Activated CD4-positive, alpha-beta memory T cell treated with anti-CD3 and anti-CD28 coated beads, Interleukin-2, amount 10 ng/mL, durations not matched to agents 7 days and 5 days (primary cell): ENCODE measurements at regions of chr3 and their contacts with region 1.

Region 1: GRCh38 chr3:66407611-66408218 is 93.1 kb downstream of the LRIG1 start:
- DNase-seq: peak; percentile 76
- H3K4me3 Mint-ChIP-seq: no peak overlapping the region
- H3K27ac Mint-ChIP-seq: no peak overlapping the region
- H3K4me1 Mint-ChIP-seq: peaks cover 2% of the 10 kb centered on the region
- H3K27me3 Mint-ChIP-seq: no peaks in the 10 kb centered on the region

Region 2: GRCh38 chr3:66224220-66224619 is 183.5 kb before region 1 on chr3:
- CTCF ChIA-PET with region 1: no interaction called
- POLR2A ChIA-PET with region 1: no interaction called
- DNase-seq: no peak
- H3K4me3 Mint-ChIP-seq: no peak overlapping the region
- H3K27ac Mint-ChIP-seq: no peak overlapping the region
- H3K4me1 Mint-ChIP-seq: peaks cover 39% of the 10 kb centered on the region
- H3K27me3 Mint-ChIP-seq: no peaks in the 10 kb centered on the region

Region 3: GRCh38 chr3:66394019-66394752 is 13.5 kb before region 1 on chr3:
- CTCF ChIA-PET with region 1: interaction called, 15 read pairs
- POLR2A ChIA-PET with region 1: interaction called, 5 read pairs
- DNase-seq: peak; percentile 73
- H3K4me3 Mint-ChIP-seq: peak overlapping the region; percentile 75
- H3K27ac Mint-ChIP-seq: peak overlapping the region; percentile 97
- H3K4me1 Mint-ChIP-seq: peaks cover 40% of the 10 kb centered on the region
- H3K27me3 Mint-ChIP-seq: no peaks in the 10 kb centered on the region

Region 4: GRCh38 chr3:66442254-66443117 is 34.8 kb after region 1 on chr3:
- CTCF ChIA-PET with region 1: no interaction called
- POLR2A ChIA-PET with region 1: no interaction called
- DNase-seq: no peak
- H3K4me3 Mint-ChIP-seq: no peak overlapping the region
- H3K27ac Mint-ChIP-seq: no peak overlapping the region
- H3K4me1 Mint-ChIP-seq: peaks cover 14% of the 10 kb centered on the region
- H3K27me3 Mint-ChIP-seq: no peaks in the 10 kb centered on the region

Region 5: GRCh38 chr3:66472313-66473134 is 64.8 kb after region 1 on chr3:
- CTCF ChIA-PET with region 1: interaction called, 12 read pairs
- POLR2A ChIA-PET with region 1: no interaction called
- DNase-seq: peak; percentile 61
- H3K4me3 Mint-ChIP-seq: peak overlapping the region; percentile 64
- H3K27ac Mint-ChIP-seq: peak overlapping the region; percentile 90
- H3K4me1 Mint-ChIP-seq: peaks cover 70% of the 10 kb centered on the region
- H3K27me3 Mint-ChIP-seq: peaks cover 1% of the 10 kb centered on the region

Region 6: GRCh38 chr3:66483406-66483906 is 75.7 kb after region 1 on chr3:
- CTCF ChIA-PET with region 1: interaction called, 11 read pairs
- POLR2A ChIA-PET with region 1: no interaction called
- DNase-seq: no peak
- H3K4me3 Mint-ChIP-seq: peak overlapping the region; percentile 6
- H3K27ac Mint-ChIP-seq: no peak overlapping the region
- H3K4me1 Mint-ChIP-seq: peaks cover 82% of the 10 kb centered on the region
- H3K27me3 Mint-ChIP-seq: no peaks in the 10 kb centered on the region

Region 7: GRCh38 chr3:66693461-66694031 is 285.8 kb after region 1 on chr3:
- CTCF ChIA-PET with region 1: no interaction called
- POLR2A ChIA-PET with region 1: no interaction called
- DNase-seq: no peak
- H3K4me3 Mint-ChIP-seq: no peak overlapping the region
- H3K27ac Mint-ChIP-seq: no peak overlapping the region
- H3K4me1 Mint-ChIP-seq: no peaks in the 10 kb centered on the region
- H3K27me3 Mint-ChIP-seq: peaks cover 3% of the 10 kb centered on the region

Region 8: DNA sequence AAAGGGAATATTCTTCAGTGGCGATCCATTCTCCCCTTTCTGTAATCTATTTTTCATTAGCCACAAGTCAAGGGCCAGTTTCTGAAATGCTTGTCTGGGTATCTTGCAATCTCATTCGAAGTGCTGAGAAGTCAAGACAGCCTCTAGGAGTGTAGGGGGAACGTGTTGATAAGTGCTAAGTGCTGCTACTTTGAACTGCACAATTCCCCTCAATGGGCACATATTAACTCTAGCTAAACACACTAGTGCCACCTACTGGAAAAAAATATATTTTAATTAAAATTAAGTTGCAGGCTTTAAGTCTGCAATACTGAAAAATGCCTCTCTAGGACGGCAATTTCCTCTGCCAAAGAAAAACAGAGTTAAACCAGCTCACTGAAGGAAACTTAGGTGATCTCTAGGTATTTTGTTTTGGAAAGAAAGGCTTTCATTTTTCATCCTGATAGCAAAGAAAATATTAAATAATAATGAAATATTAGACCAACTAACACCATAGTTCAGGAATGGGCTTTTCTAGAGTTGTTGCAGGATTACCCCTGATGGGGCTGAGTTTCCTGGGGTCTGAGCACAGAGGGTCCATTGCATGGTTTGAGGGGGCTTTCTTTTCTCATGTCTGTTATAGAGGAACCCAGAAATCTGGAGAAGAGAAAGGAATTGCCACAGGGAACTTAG is 408.5 kb after region 1 on chr3:
- CTCF ChIA-PET with region 1: interaction called, 20 read pairs
- POLR2A ChIA-PET with region 1: no interaction called
- DNase-seq: no peak
- H3K4me3 Mint-ChIP-seq: no peak overlapping the region
- H3K27ac Mint-ChIP-seq: no peak overlapping the region
- H3K4me1 Mint-ChIP-seq: no peaks in the 10 kb centered on the region
- H3K27me3 Mint-ChIP-seq: peaks cover 4% of the 10 kb centered on the region

Region 9: GRCh38 chr3:66822186-66823008 is 414.7 kb after region 1 on chr3:
- CTCF ChIA-PET with region 1: interaction called, 20 read pairs
- POLR2A ChIA-PET with region 1: no interaction called
- DNase-seq: peak; percentile 71
- H3K4me3 Mint-ChIP-seq: no peak overlapping the region
- H3K27ac Mint-ChIP-seq: no peak overlapping the region
- H3K4me1 Mint-ChIP-seq: peaks cover 3% of the 10 kb centered on the region
- H3K27me3 Mint-ChIP-seq: peaks cover 2% of the 10 kb centered on the region